Right ventricle myocardium superior (tissue), 1 donor: ENCODE measurements at regions of chr9 and their contacts with region 1.

Region 1: DNA sequence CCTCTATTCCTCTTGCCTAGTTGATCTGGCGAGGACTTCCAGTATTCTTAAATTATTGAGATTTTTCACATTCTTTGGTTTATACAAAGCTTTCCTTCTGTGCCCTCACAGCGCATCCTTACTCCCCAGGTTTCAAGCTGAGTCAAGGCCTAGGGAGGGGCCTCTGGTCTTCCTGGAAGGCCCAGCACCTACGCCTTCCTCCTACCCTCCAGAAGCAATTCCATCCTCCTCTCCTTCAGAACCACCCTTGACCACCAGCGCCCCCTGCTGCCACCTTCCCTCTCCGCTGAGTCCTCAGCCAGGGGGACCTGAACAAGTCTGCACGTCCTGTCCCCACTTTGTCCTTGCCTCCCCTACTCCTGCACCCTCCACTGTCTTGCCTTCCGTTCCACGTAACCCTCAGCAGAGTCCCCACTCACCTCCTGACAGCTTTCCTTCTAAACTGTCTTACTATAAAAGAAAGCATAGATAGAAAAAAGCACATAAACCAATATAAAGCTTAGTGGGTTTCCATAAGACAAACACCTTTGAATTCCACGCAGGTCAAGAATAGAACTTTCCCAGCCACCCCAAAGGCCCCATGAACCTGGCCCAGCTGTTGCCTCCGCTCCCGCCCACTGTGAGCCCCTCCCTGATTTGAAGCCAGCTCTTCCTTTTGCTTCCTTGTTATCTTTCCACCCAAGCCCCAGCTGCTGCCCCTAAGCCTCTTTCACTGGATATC is 63.0 kb upstream of the CTSL start:
- DNase-seq: peak; percentile 83
- ATAC-seq: peak; percentile 93

Region 2: DNA sequence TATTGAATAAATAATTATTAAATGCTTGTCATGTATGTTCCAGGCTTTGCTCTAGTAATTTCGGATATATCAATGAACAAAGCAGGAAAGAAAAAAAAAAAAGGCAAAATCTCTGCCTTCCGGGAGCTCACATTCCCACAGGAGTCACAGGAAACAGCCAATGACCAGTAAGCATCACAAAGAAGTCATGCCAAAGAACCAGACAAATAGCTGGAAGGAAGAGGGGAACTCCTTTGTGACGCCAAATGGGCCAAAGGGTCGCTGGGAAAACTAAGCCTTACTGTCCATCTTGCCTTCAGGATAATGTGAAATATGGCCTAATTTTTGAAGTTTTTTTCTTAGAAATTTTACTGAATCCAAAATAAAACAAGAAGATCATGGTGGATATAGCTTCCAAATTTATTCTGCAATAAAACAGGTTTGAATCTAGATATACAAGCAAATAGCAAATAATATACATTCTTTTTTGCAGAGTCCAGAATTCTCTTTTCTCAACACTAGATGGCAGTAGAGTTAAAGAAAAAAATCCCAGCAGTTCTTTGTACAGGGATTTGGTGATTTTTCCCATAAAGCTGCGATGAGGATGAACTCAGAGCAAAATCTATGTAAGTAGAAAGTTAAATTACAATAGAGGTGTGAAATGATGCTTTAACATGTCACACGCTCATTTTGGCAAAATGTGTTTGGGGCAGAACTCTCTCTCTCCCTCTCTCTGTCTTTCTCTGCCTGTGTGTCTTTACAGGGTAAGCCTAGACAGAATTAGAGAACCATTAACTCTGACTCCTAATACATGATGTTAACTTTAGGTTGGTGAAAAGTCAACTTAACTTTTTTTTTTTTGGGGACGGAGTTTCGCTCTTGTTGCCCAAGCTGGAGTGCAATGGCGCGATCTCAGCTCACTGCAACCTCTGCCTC is 1248.7 kb before region 1 on chr9:
- intact Hi-C with region 1: loop called (anchors 10 kb)
- DNase-seq: no peak
- ATAC-seq: peak; percentile 52

Region 3: DNA sequence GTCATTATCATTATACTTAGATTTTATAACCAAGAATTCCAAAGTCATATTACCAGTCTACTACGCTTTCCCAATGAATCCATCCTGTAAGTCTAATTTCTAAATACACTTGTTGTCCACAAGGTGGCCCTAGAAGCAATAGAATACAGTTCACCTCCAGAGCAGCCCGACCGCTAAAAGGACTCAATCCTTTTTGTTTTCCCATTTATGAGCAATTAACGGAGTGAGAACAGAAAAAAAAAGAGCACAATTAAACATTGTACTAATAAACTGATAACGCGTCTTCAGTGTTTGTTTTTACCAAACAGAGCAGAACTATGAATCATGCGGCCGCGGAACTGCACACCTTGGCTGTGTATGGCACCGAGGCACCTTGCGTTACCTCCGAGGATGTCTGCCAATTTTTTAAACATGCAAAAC is 326.0 kb before region 1 on chr9:
- intact Hi-C with region 1: loop called (anchors 2 kb)
- DNase-seq: no peak
- ATAC-seq: peak; percentile 78

Region 4: DNA sequence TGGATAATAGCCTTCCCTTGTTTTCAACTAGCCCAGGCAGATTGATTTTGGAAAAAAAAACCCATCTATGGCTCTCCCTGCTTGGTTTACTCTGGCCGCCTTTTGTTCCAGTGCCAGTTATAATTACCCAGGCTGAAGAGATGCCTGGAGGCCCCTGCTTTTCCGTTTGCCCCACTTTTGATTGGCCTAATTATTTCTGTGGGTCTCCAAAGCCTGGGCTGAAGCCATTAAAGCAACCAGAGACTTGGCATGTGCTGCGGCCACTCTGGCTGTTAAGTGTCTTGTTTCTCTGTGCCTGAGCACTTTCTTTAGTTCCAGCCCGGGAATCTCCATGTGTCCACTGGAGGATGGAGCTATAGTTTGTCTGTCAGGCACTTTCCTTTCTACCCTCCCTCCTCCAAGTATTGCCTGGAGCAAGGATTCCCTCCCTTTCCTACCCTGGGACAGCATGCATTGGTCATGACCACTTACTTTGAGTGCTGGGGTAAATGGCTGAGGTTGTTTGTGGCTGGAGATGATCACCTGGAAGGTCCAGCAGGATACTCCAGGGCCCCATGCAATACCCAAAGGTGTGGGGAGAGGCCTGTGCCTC is 42.1 kb before region 1 on chr9:
- intact Hi-C with region 1: no loop called
- DNase-seq: no peak
- ATAC-seq: no peak